ENCODE measurements at regions of chr13 and their contacts with region 1.

Region 1: GRCh38 chr13:113816946-113817859 is 46.7 kb downstream of the GAS6 start:
- DNase-seq: peak; percentile 83 to 95 (median 90)
- H3K4me3 ChIP-seq: no peak overlapping the region
- H3K27ac ChIP-seq: peak overlapping the region in 1 of 5 donors; percentile 80
- H3K4me1 ChIP-seq: peaks cover 13 to 18% of the 10 kb centered on the region in 2 donors
- H3K27me3 ChIP-seq: no peaks in the 10 kb centered on the region
- CTCF ChIP-seq: peak; percentile 68 to 95 (median 80)
- POLR2A ChIP-seq: no peak

Region 2: DNA sequence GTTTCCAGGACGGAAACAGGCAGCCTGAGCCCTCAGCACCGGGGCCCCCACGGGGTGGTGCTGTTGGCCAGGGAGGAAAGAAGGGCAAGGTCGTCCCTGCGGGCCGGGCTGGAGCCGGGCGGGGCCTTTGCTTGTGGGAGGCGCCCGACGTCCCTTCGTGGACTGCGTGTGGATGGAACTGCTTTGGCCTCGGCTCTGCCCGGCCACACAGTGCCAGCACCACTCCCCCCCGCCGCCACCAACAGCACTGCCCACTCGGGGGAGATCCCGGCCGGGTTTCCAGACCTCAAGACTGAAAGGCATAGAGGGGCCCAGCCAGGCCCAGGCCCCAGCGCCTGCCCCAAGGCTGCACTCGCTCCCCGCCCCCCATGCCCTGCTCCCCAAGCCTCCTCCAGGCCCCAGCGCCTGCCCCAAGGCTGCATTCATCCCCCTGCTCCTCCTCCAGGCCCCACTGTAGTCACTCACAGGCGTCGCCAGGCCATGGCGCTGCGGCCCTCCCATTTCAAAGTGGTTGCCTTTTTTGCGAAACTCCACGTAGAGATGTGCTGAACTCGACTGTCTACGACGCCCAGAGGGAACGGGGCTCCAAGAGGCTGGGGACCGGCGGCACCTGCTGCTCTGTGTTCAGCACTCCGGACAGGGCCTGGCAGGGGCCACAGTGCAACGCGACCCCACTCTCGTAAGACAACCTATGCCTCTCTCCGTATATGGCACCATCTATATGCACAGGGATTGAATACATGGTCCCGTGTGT is 134.2 kb after region 1 on chr13:
- intact Hi-C with region 1: loop called (anchors 5 kb)
- DNase-seq: peak; percentile 86 to 91 (median 90)
- H3K4me3 ChIP-seq: no peak overlapping the region
- H3K27ac ChIP-seq: no peak overlapping the region
- H3K4me1 ChIP-seq: peaks cover 0 to 9% of the 10 kb centered on the region in 2 donors
- H3K27me3 ChIP-seq: no peaks in the 10 kb centered on the region
- CTCF ChIP-seq: peak; percentile 72 to 94 (median 91)
- POLR2A ChIP-seq: no peak